ENCODE measurements at regions of chr2 and their contacts with region 1.

Region 1: DNA sequence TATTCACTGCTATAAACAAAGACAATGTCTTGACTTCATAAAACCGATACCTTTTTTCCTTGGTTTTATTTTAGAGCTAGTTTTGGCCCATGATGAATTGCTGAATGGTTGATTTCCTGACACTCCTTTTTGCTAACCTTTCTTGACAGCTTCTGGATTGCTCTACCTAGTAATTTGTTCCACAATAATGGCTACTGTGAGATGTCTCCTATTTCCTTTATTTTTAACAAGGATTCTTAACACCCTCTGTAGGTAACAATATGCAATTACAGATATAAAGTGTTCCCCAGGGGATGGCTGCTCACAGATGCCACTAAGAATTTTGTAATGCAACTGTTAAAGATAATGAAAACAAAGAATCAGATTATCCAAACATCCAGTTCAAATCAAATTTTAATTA is 100.8 kb upstream of the ATP5MC3 start:
- DNase-seq: peak; percentile 17 to 63 (median 21)
- ATAC-seq: peak; percentile 94
- H3K4me3 ChIP-seq: no peak overlapping the region
- H3K27ac ChIP-seq: no peak overlapping the region
- H3K4me1 ChIP-seq: no peaks in the 10 kb centered on the region
- H3K27me3 ChIP-seq: peaks cover 2 to 6% of the 10 kb centered on the region in 2 experiments; a peak in 3 of 5 replicates
- CTCF ChIP-seq: peak; percentile 35 to 73 (median 59); a peak in 4 of 6 replicates
- EP300 ChIP-seq: no peak
- POLR2A ChIP-seq: no peak
- RAD21 ChIP-seq: peak; percentile 68 to 79

Region 2: DNA sequence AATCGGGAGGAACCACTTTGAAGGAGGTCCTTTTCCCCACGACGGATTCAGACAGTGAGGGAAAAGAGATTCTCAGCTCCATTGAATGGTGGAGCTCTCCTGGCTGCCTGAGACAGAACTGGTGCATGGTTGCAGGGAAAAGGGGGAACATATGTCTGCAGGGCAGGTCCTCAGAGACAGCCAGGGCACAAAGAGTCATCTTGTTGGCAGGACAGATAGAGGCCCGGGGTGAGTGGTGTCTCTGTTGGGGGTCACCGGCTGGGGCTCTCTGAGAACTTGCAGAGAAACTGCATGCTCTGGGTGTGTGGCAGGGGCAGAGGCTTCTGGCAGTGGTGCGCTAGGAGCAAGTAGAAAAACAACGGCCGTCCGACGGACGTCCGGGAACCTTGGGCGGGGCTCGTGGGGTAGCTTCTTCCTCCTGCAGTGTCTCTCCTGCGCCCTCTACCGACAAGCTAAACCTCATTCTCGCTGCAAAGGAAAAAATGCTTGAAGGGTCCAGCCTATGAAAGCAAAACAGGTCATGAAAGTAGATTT is 1833.3 kb before region 1 on chr2:
- CTCF ChIA-PET with region 1: no interaction called
- POLR2A ChIA-PET with region 1: no interaction called
- in situ Hi-C with region 1: no loop called
- intact Hi-C with region 1: no loop called
- DNase-seq: peak; percentile 65 to 91 (median 73)
- ATAC-seq: peak; percentile 99
- H3K4me3 ChIP-seq: no peak overlapping the region
- H3K27ac ChIP-seq: no peak overlapping the region
- H3K4me1 ChIP-seq: no peaks in the 10 kb centered on the region
- H3K27me3 ChIP-seq: peaks cover 12 to 23% of the 10 kb centered on the region in 2 experiments; a peak in 4 of 5 replicates
- CTCF ChIP-seq: peak; percentile 87 to 92 (median 91)
- EP300 ChIP-seq: no peak
- POLR2A ChIP-seq: no peak
- RAD21 ChIP-seq: peak; percentile 60 to 83

Region 3: DNA sequence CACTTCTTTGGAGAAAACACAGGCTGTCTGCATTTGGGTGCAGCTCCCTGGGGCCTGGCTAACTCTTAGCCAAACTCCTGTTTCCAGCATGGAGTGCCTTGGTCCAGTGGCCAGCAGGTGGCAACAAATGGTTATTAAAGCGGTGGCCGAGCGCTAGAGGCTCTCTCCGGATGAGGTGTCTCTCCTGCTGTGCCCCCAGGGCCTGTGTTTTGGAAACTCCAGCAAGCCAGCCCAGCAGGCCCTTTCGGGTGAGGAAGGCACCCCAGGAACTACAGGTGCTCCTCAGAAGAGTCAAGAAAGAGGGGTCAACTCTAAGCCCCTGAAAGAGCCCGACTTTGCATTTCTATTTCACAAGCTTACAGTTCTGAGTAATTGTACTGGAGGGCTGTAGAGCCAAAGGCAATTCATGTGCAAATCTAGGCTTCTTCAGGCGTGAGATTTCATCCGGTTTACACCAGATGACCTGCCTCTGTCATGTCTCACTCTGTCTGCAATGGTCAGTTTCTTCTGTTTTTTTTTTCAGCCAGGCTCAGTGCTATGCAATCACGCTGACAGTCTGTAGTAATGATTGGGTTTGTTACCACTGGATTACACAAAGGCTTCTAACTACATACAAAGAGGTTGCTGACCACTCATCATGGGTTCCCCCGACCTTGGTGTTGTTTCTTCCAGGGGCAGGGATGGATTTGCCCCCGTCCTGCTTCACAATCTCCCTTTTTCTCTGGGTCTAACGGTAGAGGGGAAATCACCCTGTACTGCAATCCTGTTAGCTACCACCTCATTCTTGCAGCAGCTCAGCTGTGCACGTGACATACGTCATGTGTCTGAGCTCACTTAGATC is 510.4 kb before region 1 on chr2:
- CTCF ChIA-PET with region 1: interaction called, 3 read pairs
- POLR2A ChIA-PET with region 1: no interaction called
- in situ Hi-C with region 1: no loop called
- intact Hi-C with region 1: loop called (anchors 5 kb)
- DNase-seq: peak; percentile 57 to 74 (median 66)
- ATAC-seq: peak; percentile 99
- H3K4me3 ChIP-seq: no peak overlapping the region
- H3K27ac ChIP-seq: no peak overlapping the region
- H3K4me1 ChIP-seq: no peaks in the 10 kb centered on the region
- H3K27me3 ChIP-seq: peaks cover 0 to 21% of the 10 kb centered on the region in 2 experiments; a peak in 3 of 5 replicates
- CTCF ChIP-seq: peak; percentile 88 to 96 (median 89)
- EP300 ChIP-seq: no peak
- POLR2A ChIP-seq: no peak
- RAD21 ChIP-seq: peak; percentile 85 to 90

Region 4: GRCh38 chr2:175030380-175031271 is 251.7 kb before region 1 on chr2:
- CTCF ChIA-PET with region 1: interaction called, 10 read pairs
- POLR2A ChIA-PET with region 1: no interaction called
- in situ Hi-C with region 1: no loop called
- intact Hi-C with region 1: loop called (anchors 1 kb)
- DNase-seq: peak in 2 of 4 experiments; percentile 36 to 55
- ATAC-seq: peak; percentile 98
- H3K4me3 ChIP-seq: no peak overlapping the region
- H3K27ac ChIP-seq: no peak overlapping the region
- H3K4me1 ChIP-seq: no peaks in the 10 kb centered on the region
- H3K27me3 ChIP-seq: peaks cover 0 to 6% of the 10 kb centered on the region in 2 experiments; a peak in 3 of 5 replicates
- CTCF ChIP-seq: peak; percentile 60 to 73 (median 68)
- EP300 ChIP-seq: no peak
- POLR2A ChIP-seq: no peak
- RAD21 ChIP-seq: peak; percentile 55 to 82

Region 5: GRCh38 chr2:175036582-175037018 is 245.7 kb before region 1 on chr2:
- CTCF ChIA-PET with region 1: interaction called, 10 read pairs
- POLR2A ChIA-PET with region 1: no interaction called
- in situ Hi-C with region 1: loop called (anchors 10 kb)
- intact Hi-C with region 1: loop called (anchors 1 kb)
- DNase-seq: peak; percentile 49 to 55 (median 53)
- ATAC-seq: peak; percentile 82
- H3K4me3 ChIP-seq: no peak overlapping the region
- H3K27ac ChIP-seq: no peak overlapping the region
- H3K4me1 ChIP-seq: no peaks in the 10 kb centered on the region; a peak in 1 of 5 replicates
- H3K27me3 ChIP-seq: no peaks in the 10 kb centered on the region; a peak in 1 of 5 replicates
- CTCF ChIP-seq: peak; percentile 47 to 76 (median 53); a peak in 5 of 6 replicates
- EP300 ChIP-seq: no peak
- POLR2A ChIP-seq: no peak
- RAD21 ChIP-seq: peak; percentile 52 to 76

Region 6: GRCh38 chr2:175048275-175048674 is 234.0 kb before region 1 on chr2:
- CTCF ChIA-PET with region 1: no interaction called
- POLR2A ChIA-PET with region 1: no interaction called
- in situ Hi-C with region 1: loop called (anchors 10 kb)
- intact Hi-C with region 1: no loop called
- DNase-seq: no peak
- ATAC-seq: no peak
- H3K4me3 ChIP-seq: no peak overlapping the region
- H3K27ac ChIP-seq: no peak overlapping the region
- H3K4me1 ChIP-seq: no peaks in the 10 kb centered on the region
- H3K27me3 ChIP-seq: no peaks in the 10 kb centered on the region
- CTCF ChIP-seq: no peak
- EP300 ChIP-seq: no peak
- POLR2A ChIP-seq: no peak
- RAD21 ChIP-seq: no peak

Region 7: DNA sequence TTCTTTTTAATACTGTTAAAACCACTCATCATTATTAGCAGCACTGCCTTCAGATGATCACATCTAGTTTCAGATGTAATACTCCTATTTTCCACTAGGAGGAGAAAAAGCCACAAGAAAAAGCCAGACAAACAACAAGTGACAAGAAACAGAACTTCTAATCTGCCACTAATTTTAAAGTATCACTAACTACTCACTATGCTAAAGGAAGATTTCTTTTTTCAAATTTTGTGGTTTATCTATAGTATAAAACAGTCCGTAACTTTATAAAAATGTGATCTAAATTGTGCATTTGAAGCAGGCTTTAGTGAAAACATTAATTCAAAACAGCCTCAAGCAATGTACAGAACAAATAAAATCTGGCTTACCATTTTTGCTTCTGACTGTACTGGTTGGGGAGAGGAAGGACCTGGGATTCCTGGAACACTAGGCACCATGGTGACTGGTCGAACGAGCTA is 171.1 kb before region 1 on chr2:
- CTCF ChIA-PET with region 1: no interaction called
- POLR2A ChIA-PET with region 1: no interaction called
- in situ Hi-C with region 1: no loop called
- intact Hi-C with region 1: loop called (anchors 5 kb)
- DNase-seq: peak; percentile 37 to 63 (median 56)
- ATAC-seq: peak; percentile 90
- H3K4me3 ChIP-seq: no peak overlapping the region
- H3K27ac ChIP-seq: no peak overlapping the region
- H3K4me1 ChIP-seq: no peaks in the 10 kb centered on the region
- H3K27me3 ChIP-seq: no peaks in the 10 kb centered on the region
- CTCF ChIP-seq: peak; percentile 42 to 70 (median 62); a peak in 3 of 6 replicates
- EP300 ChIP-seq: no peak
- POLR2A ChIP-seq: no peak
- RAD21 ChIP-seq: peak; percentile 46 to 77; a peak in 3 of 4 replicates

Region 8: DNA sequence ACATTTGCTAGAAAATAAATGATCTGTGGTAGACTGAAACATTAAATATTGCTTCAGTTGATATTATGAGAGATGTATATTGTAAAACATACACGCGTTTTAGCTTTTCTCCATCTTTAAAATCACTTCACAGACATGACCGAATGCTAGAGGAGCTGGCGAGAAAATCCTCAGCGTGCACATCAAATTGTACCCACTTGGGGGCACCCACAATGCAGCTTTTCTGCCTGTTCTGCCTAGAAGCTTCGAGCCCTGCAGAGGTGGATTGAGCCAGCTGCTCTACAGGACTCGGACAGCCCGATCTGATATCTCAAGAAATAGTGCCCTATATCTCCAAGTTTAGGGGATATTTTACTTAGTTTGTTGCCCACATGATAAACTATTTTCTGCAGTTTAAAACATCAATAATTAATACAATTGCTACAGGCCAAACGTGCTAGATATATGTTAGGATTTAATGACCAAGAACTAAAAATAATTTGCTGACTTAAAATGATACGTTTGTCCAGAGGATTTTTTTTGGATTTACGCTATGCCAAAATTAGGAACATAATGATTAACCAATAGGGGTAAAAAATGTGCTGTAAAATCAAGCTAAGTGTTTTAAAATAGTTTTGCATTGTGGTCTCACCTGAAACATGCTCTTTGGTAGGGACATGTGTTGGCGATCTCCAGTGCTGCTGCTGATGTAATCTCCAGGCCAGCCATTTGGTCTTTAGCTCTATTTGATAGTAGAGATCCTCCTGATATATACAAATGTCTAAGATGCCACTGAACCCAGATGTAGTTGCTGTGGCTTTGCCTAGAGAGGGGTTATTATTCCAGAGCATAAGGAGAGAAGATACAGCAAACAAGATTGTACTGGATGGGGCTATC is 78.4 kb before region 1 on chr2:
- CTCF ChIA-PET with region 1: no interaction called
- POLR2A ChIA-PET with region 1: no interaction called
- in situ Hi-C with region 1: no loop called
- intact Hi-C with region 1: loop called (anchors 5 kb)
- DNase-seq: peak in 3 of 4 experiments; percentile 19 to 58 (median 36)
- ATAC-seq: peak; percentile 99
- H3K4me3 ChIP-seq: no peak overlapping the region
- H3K27ac ChIP-seq: no peak overlapping the region
- H3K4me1 ChIP-seq: no peaks in the 10 kb centered on the region
- H3K27me3 ChIP-seq: no peaks in the 10 kb centered on the region
- CTCF ChIP-seq: peak; percentile 63 to 74 (median 71)
- EP300 ChIP-seq: no peak
- POLR2A ChIP-seq: no peak
- RAD21 ChIP-seq: peak; percentile 11 to 56; a peak in 2 of 4 replicates

Measured in K562 (cell line).